ENCODE measurements at regions of chr10 and their contacts with region 1.

Region 1: DNA sequence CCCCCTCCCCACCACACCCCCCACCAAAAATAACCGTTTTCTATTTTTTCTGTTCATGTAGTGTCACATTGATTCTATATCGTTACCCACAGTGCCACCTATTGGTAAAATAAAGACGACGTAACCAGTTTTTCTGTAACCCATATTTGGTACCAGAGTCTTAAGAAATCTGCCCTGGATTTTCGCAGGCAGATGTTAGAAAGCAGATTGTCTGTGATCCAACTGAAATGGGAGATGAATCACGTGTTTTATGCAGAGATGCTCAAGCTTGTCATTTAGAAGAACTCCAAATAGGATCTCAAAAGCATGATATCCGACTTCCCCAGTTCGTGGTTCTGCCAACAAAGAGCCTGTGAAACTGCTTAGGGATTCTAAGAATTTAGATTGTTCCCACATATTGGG is 261.1 kb upstream of the CSTF2T start:
- DNase-seq: peak; percentile 89
- ATAC-seq: peak; percentile 56
- H3K4me3 ChIP-seq: no peak overlapping the region
- H3K27ac ChIP-seq: no peak overlapping the region
- H3K4me1 ChIP-seq: peaks cover 16% of the 10 kb centered on the region
- H3K27me3 ChIP-seq: peaks cover 8% of the 10 kb centered on the region
- CTCF ChIP-seq: peak; percentile 94

Region 2: GRCh38 chr10:51231754-51232153 is 728.7 kb before region 1 on chr10:
- CTCF ChIA-PET with region 1: no interaction called
- POLR2A ChIA-PET with region 1: no interaction called
- intact Hi-C with region 1: loop called (anchors 10 kb)
- DNase-seq: peak; percentile 94
- ATAC-seq: peak; percentile 78
- H3K4me3 ChIP-seq: no peak overlapping the region
- H3K27ac ChIP-seq: no peak overlapping the region
- H3K4me1 ChIP-seq: peaks cover 34% of the 10 kb centered on the region
- H3K27me3 ChIP-seq: no peaks in the 10 kb centered on the region
- CTCF ChIP-seq: no peak

Region 3: GRCh38 chr10:51422311-51423120 is 538.0 kb before region 1 on chr10:
- CTCF ChIA-PET with region 1: no interaction called
- POLR2A ChIA-PET with region 1: no interaction called
- intact Hi-C with region 1: loop called (anchors 1 kb)
- DNase-seq: peak; percentile 95
- ATAC-seq: peak; percentile 95
- H3K4me3 ChIP-seq: no peak overlapping the region
- H3K27ac ChIP-seq: no peak overlapping the region
- H3K4me1 ChIP-seq: no peaks in the 10 kb centered on the region; the same call in 1 of the 2 replicates
- H3K27me3 ChIP-seq: no peaks in the 10 kb centered on the region
- CTCF ChIP-seq: peak; percentile 100

Region 4: DNA sequence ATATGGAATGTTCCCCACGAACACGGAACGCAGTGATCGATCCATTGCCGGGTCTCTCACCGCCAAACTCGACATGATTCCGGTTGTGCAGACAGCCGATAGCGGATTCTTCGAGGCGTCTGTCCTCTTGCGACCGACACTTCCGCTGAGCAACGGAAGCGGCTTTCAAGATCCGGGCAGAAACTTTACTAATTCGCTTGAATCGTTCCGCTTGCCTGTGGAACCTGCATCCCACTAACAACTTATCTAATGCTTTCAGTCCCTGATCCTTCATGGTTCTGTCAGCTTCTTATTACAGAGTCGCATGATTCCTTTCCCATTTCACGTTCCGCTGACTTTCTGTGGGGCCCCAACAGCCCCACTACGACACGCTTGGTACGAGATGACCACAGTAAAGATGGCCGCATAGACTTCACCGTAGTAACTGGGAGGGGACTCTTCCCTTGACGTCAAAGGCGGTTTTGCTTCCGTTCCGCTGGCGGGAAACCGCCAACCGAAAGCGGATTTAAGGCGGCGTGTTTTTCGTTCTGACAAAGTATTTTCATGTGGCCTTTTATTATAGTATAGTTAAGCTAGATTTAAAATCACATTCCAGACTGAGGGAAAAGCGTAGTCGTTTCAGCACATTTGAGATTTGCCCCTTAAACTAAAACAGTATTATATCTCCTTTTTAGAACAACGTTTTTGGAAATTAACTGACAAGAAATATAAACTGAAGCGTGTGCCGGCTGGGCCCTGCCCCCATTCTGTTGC is 260.8 kb before region 1 on chr10 and contains the start of gene CSTF2T:
- CTCF ChIA-PET with region 1: no interaction called
- POLR2A ChIA-PET with region 1: no interaction called
- intact Hi-C with region 1: loop called (anchors 5 kb)
- DNase-seq: peak; percentile 99
- ATAC-seq: peak; percentile 91
- H3K4me3 ChIP-seq: peak within 1 kb of the TSS; percentile 74
- H3K27ac ChIP-seq: peak within 1 kb of the TSS; percentile 78
- H3K4me1 ChIP-seq: peaks cover 32% of the 10 kb centered on the region
- H3K27me3 ChIP-seq: no peaks in the 10 kb centered on the region
- CTCF ChIP-seq: no peak
- total RNA-seq, gene CSTF2T: 41.7 and 45.2 TPM in 2 replicates

Region 5: GRCh38 chr10:52004342-52004949 is 44.0 kb after region 1 on chr10:
- CTCF ChIA-PET with region 1: interaction called, 4 read pairs
- POLR2A ChIA-PET with region 1: no interaction called
- intact Hi-C with region 1: loop called (anchors 2 kb)
- DNase-seq: peak; percentile 94
- ATAC-seq: peak; percentile 89
- H3K4me3 ChIP-seq: no peak overlapping the region
- H3K27ac ChIP-seq: no peak overlapping the region
- H3K4me1 ChIP-seq: no peaks in the 10 kb centered on the region
- H3K27me3 ChIP-seq: peaks cover 15% of the 10 kb centered on the region; the same call in 1 of the 2 replicates
- CTCF ChIP-seq: peak; percentile 96

Measured in PC-3 (cell line).